ENCODE measurements at regions of chr2 and their contacts with region 1.

Region 1: DNA sequence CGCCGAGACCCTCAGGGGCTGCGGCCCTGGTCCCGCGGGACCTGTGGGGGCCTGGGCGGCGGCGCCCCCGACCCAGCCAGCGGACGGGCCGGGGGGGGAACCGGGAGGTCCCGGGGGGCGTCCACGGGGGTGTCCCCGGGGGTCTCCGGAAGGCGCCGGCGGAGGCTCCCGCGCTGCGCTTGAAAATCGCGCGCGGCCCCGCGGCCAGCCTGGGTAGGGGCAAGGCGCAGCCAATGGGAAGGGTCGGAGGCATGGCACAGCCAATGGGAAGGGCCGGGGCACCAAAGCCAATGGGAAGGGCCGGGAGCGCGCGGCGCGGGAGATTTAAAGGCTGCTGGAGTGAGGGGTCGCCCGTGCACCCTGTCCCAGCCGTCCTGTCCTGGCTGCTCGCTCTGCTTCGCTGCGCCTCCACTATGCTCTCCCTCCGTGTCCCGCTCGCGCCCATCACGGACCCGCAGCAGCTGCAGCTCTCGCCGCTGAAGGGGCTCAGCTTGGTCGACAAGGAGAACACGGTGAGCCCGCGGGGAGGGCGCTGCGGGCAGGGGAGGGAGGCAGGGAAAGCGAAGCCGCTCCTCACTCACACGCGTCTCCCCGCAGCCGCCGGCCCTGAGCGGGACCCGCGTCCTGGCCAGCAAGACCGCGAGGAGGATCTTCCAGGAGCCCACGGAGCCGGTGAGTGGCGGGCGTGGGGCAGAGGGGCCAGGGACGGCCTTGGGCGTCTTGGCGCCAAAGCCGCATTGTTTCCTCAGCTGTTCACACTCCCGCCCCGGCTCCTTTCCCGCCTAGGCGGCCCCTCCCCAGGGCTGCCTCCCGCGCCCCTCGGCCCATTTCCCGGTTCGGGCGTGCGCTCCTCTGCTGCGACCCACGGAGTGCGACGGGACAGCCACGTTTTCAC is at the start of gene RRM2:
- DNase-seq: peak; percentile 91
- ATAC-seq: peak; percentile 82
- H3K4me3 ChIP-seq: peak within 1 kb of the TSS in 4 of 5 experiments; percentile 42 to 77 (median 54)
- H3K4me3 Mint-ChIP-seq: peak within 1 kb of the TSS; percentile 98
- H3K27ac ChIP-seq: no peak within 1 kb of the TSS
- H3K27ac Mint-ChIP-seq: peak within 1 kb of the TSS; percentile 59
- H3K4me1 ChIP-seq: peaks cover 29 to 32% of the 10 kb centered on the region in 2 donors
- H3K4me1 Mint-ChIP-seq: peaks cover 30% of the 10 kb centered on the region
- H3K27me3 ChIP-seq: peaks cover 0 to 17% (median 8%) of the 10 kb centered on the region in 4 experiments
- H3K27me3 Mint-ChIP-seq: peaks cover 10% of the 10 kb centered on the region
- CTCF ChIP-seq: no peak
- total RNA-seq, gene RRM2: 1.2 and 1.3 TPM in 2 replicates

Region 2: GRCh38 chr2:10141736-10142642 is 19.4 kb after region 1 on chr2:
- CTCF ChIA-PET with region 1: interaction called, 20 read pairs
- POLR2A ChIA-PET with region 1: no interaction called
- intact Hi-C with region 1: no loop called
- DNase-seq: peak; percentile 53
- ATAC-seq: peak; percentile 88
- H3K4me3 ChIP-seq: no peak overlapping the region
- H3K4me3 Mint-ChIP-seq: no peak overlapping the region
- H3K27ac ChIP-seq: no peak overlapping the region
- H3K27ac Mint-ChIP-seq: no peak overlapping the region
- H3K4me1 ChIP-seq: no peaks in the 10 kb centered on the region
- H3K4me1 Mint-ChIP-seq: no peaks in the 10 kb centered on the region
- H3K27me3 ChIP-seq: no peaks in the 10 kb centered on the region
- H3K27me3 Mint-ChIP-seq: no peaks in the 10 kb centered on the region
- CTCF ChIP-seq: peak; percentile 37

Region 3: GRCh38 chr2:10225291-10226037 is 102.8 kb after region 1 on chr2:
- CTCF ChIA-PET with region 1: no interaction called
- POLR2A ChIA-PET with region 1: no interaction called
- intact Hi-C with region 1: no loop called
- DNase-seq: no peak
- ATAC-seq: no peak
- H3K4me3 ChIP-seq: no peak overlapping the region
- H3K4me3 Mint-ChIP-seq: no peak overlapping the region
- H3K27ac ChIP-seq: no peak overlapping the region
- H3K27ac Mint-ChIP-seq: no peak overlapping the region
- H3K4me1 ChIP-seq: no peaks in the 10 kb centered on the region
- H3K4me1 Mint-ChIP-seq: no peaks in the 10 kb centered on the region
- H3K27me3 ChIP-seq: peaks cover 0 to 5% (median 2%) of the 10 kb centered on the region in 4 experiments
- H3K27me3 Mint-ChIP-seq: peaks cover 13% of the 10 kb centered on the region
- CTCF ChIP-seq: no peak

Region 4: GRCh38 chr2:10278029-10278762 is 155.6 kb after region 1 on chr2:
- CTCF ChIA-PET with region 1: no interaction called
- POLR2A ChIA-PET with region 1: no interaction called
- intact Hi-C with region 1: loop called (anchors 10 kb)
- DNase-seq: no peak
- ATAC-seq: no peak
- H3K4me3 ChIP-seq: no peak overlapping the region
- H3K4me3 Mint-ChIP-seq: no peak overlapping the region
- H3K27ac ChIP-seq: no peak overlapping the region
- H3K27ac Mint-ChIP-seq: no peak overlapping the region
- H3K4me1 ChIP-seq: no peaks in the 10 kb centered on the region
- H3K4me1 Mint-ChIP-seq: peaks cover 2% of the 10 kb centered on the region
- H3K27me3 ChIP-seq: no peaks in the 10 kb centered on the region
- H3K27me3 Mint-ChIP-seq: peaks cover 10% of the 10 kb centered on the region
- CTCF ChIP-seq: no peak

Region 5: DNA sequence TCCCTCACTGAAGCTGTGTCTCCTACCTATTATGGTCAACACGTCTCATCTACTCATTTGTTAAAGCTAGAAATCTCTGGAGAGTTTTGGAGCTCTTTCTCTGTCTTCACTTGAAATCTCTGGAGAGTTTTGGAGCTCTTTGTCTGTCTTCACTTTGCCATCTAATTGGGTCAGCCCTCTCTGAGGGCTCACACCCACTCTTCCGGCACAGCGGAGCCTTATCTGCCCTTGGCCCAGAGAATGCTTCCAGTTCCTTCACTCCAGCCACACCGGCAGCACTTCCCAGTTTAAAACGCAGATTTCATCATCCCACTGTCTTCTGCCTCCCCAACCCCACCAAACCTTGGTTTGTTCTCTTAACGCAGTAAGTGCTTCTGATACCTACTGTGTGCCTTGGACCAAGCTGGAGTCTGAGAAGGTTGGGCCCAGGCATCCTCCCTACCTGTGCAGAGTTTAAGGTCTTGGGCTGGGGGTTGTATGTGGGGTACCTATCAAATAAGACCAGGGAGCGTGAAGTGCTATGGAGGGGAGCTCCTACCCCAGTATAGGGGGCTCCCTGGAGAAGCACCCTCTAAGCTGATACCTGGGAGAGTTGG is 185.0 kb after region 1 on chr2:
- CTCF ChIA-PET with region 1: interaction called, 11 read pairs
- POLR2A ChIA-PET with region 1: no interaction called
- intact Hi-C with region 1: loop called (anchors 1 kb)
- DNase-seq: no peak
- ATAC-seq: no peak
- H3K4me3 ChIP-seq: no peak overlapping the region
- H3K4me3 Mint-ChIP-seq: no peak overlapping the region
- H3K27ac ChIP-seq: no peak overlapping the region
- H3K27ac Mint-ChIP-seq: no peak overlapping the region
- H3K4me1 ChIP-seq: peaks cover 23% of the 10 kb centered on the region in 2 donors
- H3K4me1 Mint-ChIP-seq: peaks cover 53% of the 10 kb centered on the region
- H3K27me3 ChIP-seq: no peaks in the 10 kb centered on the region
- H3K27me3 Mint-ChIP-seq: no peaks in the 10 kb centered on the region
- CTCF ChIP-seq: no peak

Region 6: GRCh38 chr2:10668402-10669012 is 545.9 kb after region 1 on chr2:
- CTCF ChIA-PET with region 1: interaction called, 3 read pairs
- POLR2A ChIA-PET with region 1: no interaction called
- intact Hi-C with region 1: loop called (anchors 2 kb)
- DNase-seq: peak; percentile 77
- ATAC-seq: peak; percentile 56
- H3K4me3 ChIP-seq: no peak overlapping the region
- H3K4me3 Mint-ChIP-seq: no peak overlapping the region
- H3K27ac ChIP-seq: no peak overlapping the region
- H3K27ac Mint-ChIP-seq: no peak overlapping the region
- H3K4me1 ChIP-seq: no peaks in the 10 kb centered on the region
- H3K4me1 Mint-ChIP-seq: no peaks in the 10 kb centered on the region
- H3K27me3 ChIP-seq: no peaks in the 10 kb centered on the region
- H3K27me3 Mint-ChIP-seq: no peaks in the 10 kb centered on the region
- CTCF ChIP-seq: peak; percentile 97

Measured in B cell (primary cell).